Natural killer cell (primary cell): ENCODE measurements at regions of chr14 and their contacts with region 1.

Region 1: GRCh38 chr14:95483309-95484165 is 32.9 kb downstream of the SYNE3 start:
- DNase-seq: no peak
- ATAC-seq: no peak
- H3K4me3 ChIP-seq: no peak overlapping the region
- H3K4me3 Mint-ChIP-seq: no peak overlapping the region
- H3K27ac ChIP-seq: no peak overlapping the region
- H3K27ac Mint-ChIP-seq: peak overlapping the region in 1 of 2 donors; percentile 63
- H3K4me1 ChIP-seq: peaks cover 35% of the 10 kb centered on the region
- H3K4me1 Mint-ChIP-seq: peaks cover 19 to 61% of the 10 kb centered on the region in 2 donors
- H3K27me3 ChIP-seq: no peaks in the 10 kb centered on the region
- H3K27me3 Mint-ChIP-seq: no peaks in the 10 kb centered on the region
- CTCF ChIP-seq: no peak

Region 2: GRCh38 chr14:95424529-95424928 is 59.0 kb before region 1 on chr14:
- intact Hi-C with region 1: no loop called
- DNase-seq: no peak
- ATAC-seq: no peak
- H3K4me3 ChIP-seq: no peak overlapping the region
- H3K4me3 Mint-ChIP-seq: no peak overlapping the region
- H3K27ac ChIP-seq: no peak overlapping the region
- H3K27ac Mint-ChIP-seq: no peak overlapping the region
- H3K4me1 ChIP-seq: no peaks in the 10 kb centered on the region
- H3K4me1 Mint-ChIP-seq: peaks cover 0 to 9% of the 10 kb centered on the region in 2 donors
- H3K27me3 ChIP-seq: no peaks in the 10 kb centered on the region
- H3K27me3 Mint-ChIP-seq: no peaks in the 10 kb centered on the region
- CTCF ChIP-seq: no peak

Region 3: GRCh38 chr14:95507701-95508103 is 24.2 kb after region 1 on chr14:
- intact Hi-C with region 1: loop called (anchors 1 kb)
- DNase-seq: peak in 1 of 2 donors; percentile 56
- ATAC-seq: peak; percentile 66 to 95 (median 80)
- H3K4me3 ChIP-seq: no peak overlapping the region
- H3K4me3 Mint-ChIP-seq: peak overlapping the region; percentile 31
- H3K27ac ChIP-seq: peak overlapping the region; percentile 56
- H3K27ac Mint-ChIP-seq: peak overlapping the region; percentile 29 to 65
- H3K4me1 ChIP-seq: peaks cover 47% of the 10 kb centered on the region
- H3K4me1 Mint-ChIP-seq: peaks cover 46 to 57% of the 10 kb centered on the region in 2 donors
- H3K27me3 ChIP-seq: no peaks in the 10 kb centered on the region
- H3K27me3 Mint-ChIP-seq: no peaks in the 10 kb centered on the region
- CTCF ChIP-seq: no peak

Region 4: GRCh38 chr14:95515596-95516552 is 32.3 kb after region 1 on chr14:
- intact Hi-C with region 1: loop called (anchors 1 kb)
- DNase-seq: peak; percentile 87 to 93
- ATAC-seq: peak; percentile 92 to 98 (median 96)
- H3K4me3 ChIP-seq: peak overlapping the region; percentile 41
- H3K4me3 Mint-ChIP-seq: peak overlapping the region; percentile 85
- H3K27ac ChIP-seq: peak overlapping the region; percentile 74
- H3K27ac Mint-ChIP-seq: peak overlapping the region; percentile 76 to 88
- H3K4me1 ChIP-seq: peaks cover 63% of the 10 kb centered on the region
- H3K4me1 Mint-ChIP-seq: peaks cover 36 to 44% of the 10 kb centered on the region in 2 donors
- H3K27me3 ChIP-seq: no peaks in the 10 kb centered on the region
- H3K27me3 Mint-ChIP-seq: no peaks in the 10 kb centered on the region
- CTCF ChIP-seq: peak; percentile 60

Region 5: GRCh38 chr14:95545179-95546168 is 61.9 kb after region 1 on chr14:
- intact Hi-C with region 1: no loop called
- DNase-seq: no peak
- ATAC-seq: no peak
- H3K4me3 ChIP-seq: no peak overlapping the region
- H3K4me3 Mint-ChIP-seq: no peak overlapping the region
- H3K27ac ChIP-seq: no peak overlapping the region
- H3K27ac Mint-ChIP-seq: no peak overlapping the region
- H3K4me1 ChIP-seq: peaks cover 15% of the 10 kb centered on the region
- H3K4me1 Mint-ChIP-seq: peaks cover 18 to 19% of the 10 kb centered on the region in 2 donors
- H3K27me3 ChIP-seq: no peaks in the 10 kb centered on the region
- H3K27me3 Mint-ChIP-seq: no peaks in the 10 kb centered on the region
- CTCF ChIP-seq: no peak